Natural killer cell (primary cell): ENCODE measurements at regions of chr6 and their contacts with region 1.

Region 1: DNA sequence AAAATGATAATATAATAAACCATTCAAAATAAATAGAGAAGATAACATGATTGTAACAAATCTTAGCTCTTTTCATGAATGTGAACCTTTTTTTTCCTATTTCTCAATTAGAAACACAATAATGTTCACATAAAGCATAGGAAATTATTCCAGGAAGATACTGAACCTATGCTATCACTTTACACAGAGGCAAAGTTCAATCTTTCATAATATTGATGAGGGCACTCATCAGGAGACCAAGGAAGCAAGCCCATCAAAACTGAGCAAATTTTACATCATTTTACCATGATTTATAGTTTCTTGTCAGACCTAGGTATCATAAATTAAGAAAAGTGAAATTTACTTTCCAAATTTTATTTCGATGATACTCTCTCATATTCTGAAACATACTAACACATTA is 938.5 kb downstream of the TBC1D32 start:
- DNase-seq: no peak
- ATAC-seq: no peak
- H3K4me3 ChIP-seq: no peak overlapping the region
- H3K4me3 Mint-ChIP-seq: no peak overlapping the region
- H3K27ac ChIP-seq: no peak overlapping the region
- H3K27ac Mint-ChIP-seq: no peak overlapping the region
- H3K4me1 ChIP-seq: no peaks in the 10 kb centered on the region
- H3K4me1 Mint-ChIP-seq: no peaks in the 10 kb centered on the region
- H3K27me3 ChIP-seq: no peaks in the 10 kb centered on the region
- H3K27me3 Mint-ChIP-seq: no peaks in the 10 kb centered on the region
- CTCF ChIP-seq: no peak

Region 2: GRCh38 chr6:120355822-120356221 is 40.0 kb before region 1 on chr6:
- intact Hi-C with region 1: no loop called
- DNase-seq: no peak
- ATAC-seq: no peak
- H3K4me3 ChIP-seq: no peak overlapping the region
- H3K4me3 Mint-ChIP-seq: no peak overlapping the region
- H3K27ac ChIP-seq: no peak overlapping the region
- H3K27ac Mint-ChIP-seq: no peak overlapping the region
- H3K4me1 ChIP-seq: no peaks in the 10 kb centered on the region
- H3K4me1 Mint-ChIP-seq: no peaks in the 10 kb centered on the region
- H3K27me3 ChIP-seq: no peaks in the 10 kb centered on the region
- H3K27me3 Mint-ChIP-seq: no peaks in the 10 kb centered on the region
- CTCF ChIP-seq: no peak

Region 3: GRCh38 chr6:120373185-120373584 is 22.6 kb before region 1 on chr6:
- intact Hi-C with region 1: loop called (anchors 2 kb)
- DNase-seq: no peak
- ATAC-seq: no peak
- H3K4me3 ChIP-seq: no peak overlapping the region
- H3K4me3 Mint-ChIP-seq: no peak overlapping the region
- H3K27ac ChIP-seq: no peak overlapping the region
- H3K27ac Mint-ChIP-seq: no peak overlapping the region
- H3K4me1 ChIP-seq: no peaks in the 10 kb centered on the region
- H3K4me1 Mint-ChIP-seq: no peaks in the 10 kb centered on the region
- H3K27me3 ChIP-seq: no peaks in the 10 kb centered on the region
- H3K27me3 Mint-ChIP-seq: no peaks in the 10 kb centered on the region
- CTCF ChIP-seq: no peak